GM12878 (cell line): ENCODE measurements at regions of chr3 and their contacts with region 1.

Region 1: DNA sequence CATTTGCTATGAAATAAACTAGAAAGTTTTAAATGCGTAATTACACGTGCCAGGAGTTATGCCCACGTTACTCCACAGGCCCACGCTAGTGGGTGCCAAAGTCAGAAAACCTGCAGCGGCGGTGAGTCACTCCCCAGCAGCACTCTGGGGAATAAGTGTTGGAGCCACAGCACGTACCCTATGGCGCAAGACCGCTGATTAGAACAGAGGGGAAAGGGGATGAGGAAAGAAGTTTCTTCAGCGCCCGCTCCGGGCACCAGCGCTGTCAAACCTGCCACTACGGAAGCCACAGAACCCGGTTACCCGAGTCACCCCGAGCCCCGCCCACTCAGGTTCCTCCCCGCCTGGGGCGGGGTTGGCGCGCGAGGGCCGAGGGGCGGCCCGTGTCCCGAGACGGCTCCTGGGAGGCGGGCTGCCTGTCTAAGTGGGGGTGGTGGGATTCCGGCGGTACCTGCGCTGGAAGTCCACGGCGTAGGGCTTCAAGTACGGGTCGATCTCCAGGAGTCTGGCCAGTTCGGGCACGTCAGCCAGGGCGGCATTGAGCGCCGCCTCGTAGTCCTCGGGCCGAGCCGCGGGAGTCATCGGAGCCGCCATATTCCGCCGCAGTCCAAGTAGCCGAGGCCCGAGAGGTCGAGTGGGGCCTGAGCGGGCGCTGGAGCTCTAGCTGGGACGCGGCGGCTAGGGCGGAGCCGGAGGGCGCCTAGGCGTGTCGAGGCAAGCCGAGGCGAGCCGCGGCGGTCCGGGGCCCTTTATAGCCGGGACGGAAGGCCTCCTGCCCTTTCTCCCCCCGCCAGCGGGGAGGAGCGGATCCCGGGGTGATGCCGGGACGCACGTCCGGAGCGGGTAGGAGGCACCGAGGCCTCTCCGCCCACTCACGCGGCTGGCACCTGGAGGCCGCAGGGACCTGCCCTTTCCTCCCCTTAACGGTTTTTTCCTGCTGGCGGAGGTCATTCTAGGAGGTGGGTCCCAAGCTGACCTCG is at the start of gene GBE1:
- DNase-seq: peak; percentile 83
- ATAC-seq: peak; percentile 94
- H3K4me3 ChIP-seq: peak within 1 kb of the TSS; percentile 67
- H3K27ac ChIP-seq: peak within 1 kb of the TSS; percentile 97
- H3K4me1 ChIP-seq: peaks cover 9% of the 10 kb centered on the region
- H3K27me3 ChIP-seq: no peaks in the 10 kb centered on the region
- CTCF ChIP-seq: peak; percentile 52 to 56 (median 52); a peak in 5 of 6 replicates
- EP300 ChIP-seq: peak; percentile 41 to 61
- POLR2A ChIP-seq: peak; percentile 93
- RAD21 ChIP-seq: peak; percentile 48
- polyA plus RNA-seq, gene GBE1: 21.4 to 21.8 TPM

Region 2: GRCh38 chr3:81237181-81237580 is 524.0 kb before region 1 on chr3:
- CTCF ChIA-PET with region 1: no interaction called
- POLR2A ChIA-PET with region 1: no interaction called
- RAD21 ChIA-PET with region 1: no interaction called
- SMC1A ChIA-PET with region 1: no interaction called
- in situ Hi-C with region 1: no loop called
- intact Hi-C with region 1: no loop called
- DNase-seq: no peak
- ATAC-seq: no peak
- H3K4me3 ChIP-seq: no peak overlapping the region
- H3K27ac ChIP-seq: no peak overlapping the region
- H3K4me1 ChIP-seq: no peaks in the 10 kb centered on the region
- H3K27me3 ChIP-seq: no peaks in the 10 kb centered on the region
- CTCF ChIP-seq: no peak; a peak in 1 of 6 replicates
- EP300 ChIP-seq: no peak
- POLR2A ChIP-seq: no peak
- RAD21 ChIP-seq: no peak

Region 3: GRCh38 chr3:81666493-81667121 is 94.6 kb before region 1 on chr3:
- CTCF ChIA-PET with region 1: interaction called, 5 read pairs
- POLR2A ChIA-PET with region 1: no interaction called
- RAD21 ChIA-PET with region 1: interaction called, 4 read pairs
- SMC1A ChIA-PET with region 1: interaction called, 4 read pairs
- in situ Hi-C with region 1: no loop called
- intact Hi-C with region 1: loop called (anchors 2 kb)
- DNase-seq: no peak
- ATAC-seq: peak; percentile 51; the same call in 2 of the 3 replicates
- H3K4me3 ChIP-seq: no peak overlapping the region
- H3K27ac ChIP-seq: no peak overlapping the region
- H3K4me1 ChIP-seq: no peaks in the 10 kb centered on the region
- H3K27me3 ChIP-seq: no peaks in the 10 kb centered on the region
- CTCF ChIP-seq: peak; percentile 52 to 72 (median 70); a peak in 5 of 6 replicates
- EP300 ChIP-seq: no peak
- POLR2A ChIP-seq: no peak
- RAD21 ChIP-seq: peak; percentile 75

Region 4: DNA sequence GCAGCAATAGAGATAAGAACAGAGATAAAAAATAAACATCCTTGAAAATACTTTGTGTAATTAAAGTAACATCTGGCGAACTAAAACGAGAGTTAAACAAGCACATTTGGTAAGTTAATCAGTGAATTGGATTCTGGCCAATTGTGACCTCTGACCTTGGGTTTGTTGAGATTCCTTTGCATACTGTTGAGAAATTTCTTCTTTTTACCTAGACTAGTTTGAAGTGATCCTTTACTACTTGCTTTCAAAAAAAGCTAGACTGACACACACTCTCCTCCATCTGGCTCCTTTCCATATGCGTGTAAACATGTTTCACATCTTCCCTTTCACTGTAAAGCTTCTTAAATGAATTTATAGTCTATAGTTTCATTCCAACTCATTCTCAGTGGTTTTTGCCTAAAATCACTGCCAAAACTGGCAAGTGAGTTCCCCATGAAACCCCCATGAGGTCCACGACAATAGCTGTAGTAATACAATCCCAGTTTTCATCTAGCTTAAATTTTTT is 17.5 kb after region 1 on chr3:
- CTCF ChIA-PET with region 1: interaction called, 9 read pairs
- POLR2A ChIA-PET with region 1: interaction called, 9 read pairs
- RAD21 ChIA-PET with region 1: interaction called, 14 read pairs
- SMC1A ChIA-PET with region 1: interaction called, 23 read pairs
- in situ Hi-C with region 1: no loop called
- intact Hi-C with region 1: loop called (anchors 1 kb)
- DNase-seq: peak; percentile 39
- ATAC-seq: peak; percentile 73
- H3K4me3 ChIP-seq: no peak overlapping the region
- H3K27ac ChIP-seq: peak overlapping the region; percentile 35; the same call in 1 of the 2 replicates
- H3K4me1 ChIP-seq: no peaks in the 10 kb centered on the region
- H3K27me3 ChIP-seq: no peaks in the 10 kb centered on the region
- CTCF ChIP-seq: no peak
- EP300 ChIP-seq: no peak
- POLR2A ChIP-seq: no peak
- RAD21 ChIP-seq: no peak

Region 5: GRCh38 chr3:81816473-81817250 is 55.4 kb after region 1 on chr3:
- CTCF ChIA-PET with region 1: interaction called, 3 read pairs
- POLR2A ChIA-PET with region 1: interaction called, 20 read pairs
- RAD21 ChIA-PET with region 1: interaction called, 21 read pairs
- SMC1A ChIA-PET with region 1: interaction called, 7 read pairs
- in situ Hi-C with region 1: no loop called
- intact Hi-C with region 1: loop called (anchors 1 kb)
- DNase-seq: peak; percentile 90
- ATAC-seq: peak; percentile 98
- H3K4me3 ChIP-seq: 0 out of 2 replicates have a peak overlapping the region, but pooled peaks have one; percentile 27
- H3K27ac ChIP-seq: peak overlapping the region; percentile 90
- H3K4me1 ChIP-seq: peaks cover 14% of the 10 kb centered on the region
- H3K27me3 ChIP-seq: no peaks in the 10 kb centered on the region
- CTCF ChIP-seq: no peak
- EP300 ChIP-seq: peak; percentile 91 to 94
- POLR2A ChIP-seq: no peak
- RAD21 ChIP-seq: peak; percentile 37; the same call in 1 of the 2 replicates

Region 6: GRCh38 chr3:81910244-81910852 is 149.1 kb after region 1 on chr3:
- CTCF ChIA-PET with region 1: interaction called, 7 read pairs
- POLR2A ChIA-PET with region 1: interaction called, 3 read pairs
- RAD21 ChIA-PET with region 1: interaction called, 8 read pairs
- SMC1A ChIA-PET with region 1: interaction called, 8 read pairs
- in situ Hi-C with region 1: no loop called
- intact Hi-C with region 1: loop called (anchors 5 kb)
- DNase-seq: peak; percentile 21
- ATAC-seq: peak; percentile 87
- H3K4me3 ChIP-seq: no peak overlapping the region
- H3K27ac ChIP-seq: no peak overlapping the region
- H3K4me1 ChIP-seq: no peaks in the 10 kb centered on the region
- H3K27me3 ChIP-seq: no peaks in the 10 kb centered on the region
- CTCF ChIP-seq: peak; percentile 58 to 71 (median 65)
- EP300 ChIP-seq: no peak
- POLR2A ChIP-seq: no peak
- RAD21 ChIP-seq: peak; percentile 41